ENCODE measurements at regions of chr5 and their contacts with region 1.

Region 1: GRCh38 chr5:180291943-180292831 is at the start of gene MAPK9:
- DNase-seq: peak; percentile 69 to 81
- H3K4me3 ChIP-seq: peak within 1 kb of the TSS; percentile 74 to 99
- H3K27ac ChIP-seq: peak within 1 kb of the TSS; percentile 89 to 95
- H3K4me1 ChIP-seq: peaks cover 0 to 3% of the 10 kb centered on the region in 2 donors
- H3K27me3 ChIP-seq: no peaks in the 10 kb centered on the region
- CTCF ChIP-seq: no peak
- POLR2A ChIP-seq: peak; percentile 7 to 42
- total RNA-seq, gene MAPK9: 9.2 to 45.1 (median 33.3) TPM

Region 2: GRCh38 chr5:180470966-180471582 is 178.9 kb after region 1 on chr5:
- intact Hi-C with region 1: loop called (anchors 5 kb)
- DNase-seq: peak; percentile 56 to 65
- H3K4me3 ChIP-seq: no peak overlapping the region
- H3K27ac ChIP-seq: no peak overlapping the region
- H3K4me1 ChIP-seq: no peaks in the 10 kb centered on the region
- H3K27me3 ChIP-seq: no peaks in the 10 kb centered on the region
- CTCF ChIP-seq: peak; percentile 78 to 93 (median 88)
- POLR2A ChIP-seq: no peak